BJ (cell line): ENCODE measurements at regions of chr10 and their contacts with region 1.

Region 1: DNA sequence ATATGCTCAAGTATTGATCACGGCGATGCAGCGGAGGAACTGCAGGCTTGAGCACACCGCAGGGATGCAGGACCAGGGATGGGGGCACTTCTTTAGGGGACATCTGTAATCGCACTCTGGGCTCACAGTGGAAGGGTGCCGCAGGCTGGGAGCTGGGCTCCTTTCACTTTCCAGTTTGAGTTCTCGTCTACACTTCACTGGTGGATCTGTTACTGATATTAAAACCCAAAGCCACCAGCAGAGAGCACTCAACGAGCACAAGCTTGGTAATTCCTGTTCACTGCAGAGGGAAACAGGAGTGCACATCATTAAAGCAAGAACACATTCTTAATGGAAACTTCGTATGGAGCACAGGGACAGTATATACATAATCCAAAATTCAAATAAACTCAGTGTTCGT is 91.3 kb downstream of the PARD3 start:
- DNase-seq: no peak
- H3K4me3 ChIP-seq: no peak overlapping the region
- H3K27me3 ChIP-seq: no peaks in the 10 kb centered on the region
- CTCF ChIP-seq: peak; percentile 62

Region 2: DNA sequence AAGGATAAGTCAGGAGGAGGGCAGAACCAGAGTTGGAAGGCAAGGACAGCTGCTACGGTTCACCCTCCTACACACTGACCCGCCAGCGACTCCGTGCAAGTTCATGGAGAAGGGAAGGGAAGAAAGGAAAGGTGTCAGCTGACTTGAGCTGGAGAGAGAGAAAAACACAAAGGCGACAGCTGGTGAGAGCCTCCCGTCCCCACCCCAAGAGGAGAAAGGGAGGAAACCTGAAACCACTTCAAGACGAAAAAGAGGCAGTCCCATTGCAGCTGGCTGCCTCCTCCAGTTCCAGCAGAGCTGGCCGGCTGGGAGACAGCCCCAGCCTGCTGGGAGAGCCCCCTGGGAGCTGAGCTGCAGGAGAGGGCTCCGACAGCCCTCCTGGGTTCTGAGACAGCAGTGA is 16.2 kb after region 1 on chr10:
- CTCF ChIA-PET with region 1: interaction called, 11 read pairs
- POLR2A ChIA-PET with region 1: no interaction called
- DNase-seq: peak; percentile 57
- H3K4me3 ChIP-seq: peak overlapping the region; percentile 15
- H3K27me3 ChIP-seq: no peaks in the 10 kb centered on the region
- CTCF ChIP-seq: no peak

Region 3: DNA sequence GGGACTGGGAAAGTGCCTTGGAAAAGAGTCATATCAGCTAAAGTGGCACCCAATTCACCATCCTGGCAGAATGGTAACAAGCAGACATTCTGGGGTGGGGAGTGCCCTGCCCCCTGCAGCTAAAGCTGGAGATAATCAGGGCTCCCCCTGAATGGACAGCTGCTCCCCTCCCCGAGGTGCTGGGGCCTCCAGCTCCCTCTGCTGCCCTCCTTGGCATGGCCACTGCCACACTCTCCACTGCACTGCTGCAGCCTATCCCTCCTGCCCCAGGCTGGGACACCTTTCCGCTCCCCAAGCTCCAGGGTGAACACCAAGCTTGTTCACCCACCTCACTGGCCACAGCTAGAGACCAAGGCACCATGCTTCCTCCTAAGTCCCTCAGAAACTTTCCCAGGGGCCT is 101.1 kb after region 1 on chr10:
- CTCF ChIA-PET with region 1: interaction called, 10 read pairs
- POLR2A ChIA-PET with region 1: no interaction called
- DNase-seq: no peak
- H3K4me3 ChIP-seq: no peak overlapping the region
- H3K27me3 ChIP-seq: no peaks in the 10 kb centered on the region
- CTCF ChIP-seq: peak; percentile 29; the same call in 1 of the 2 replicates

Region 4: GRCh38 chr10:34985823-34986222 is 262.1 kb after region 1 on chr10:
- CTCF ChIA-PET with region 1: interaction called, 15 read pairs
- POLR2A ChIA-PET with region 1: no interaction called
- DNase-seq: no peak
- H3K4me3 ChIP-seq: no peak overlapping the region
- H3K27me3 ChIP-seq: no peaks in the 10 kb centered on the region
- CTCF ChIP-seq: peak; percentile 48

Region 5: DNA sequence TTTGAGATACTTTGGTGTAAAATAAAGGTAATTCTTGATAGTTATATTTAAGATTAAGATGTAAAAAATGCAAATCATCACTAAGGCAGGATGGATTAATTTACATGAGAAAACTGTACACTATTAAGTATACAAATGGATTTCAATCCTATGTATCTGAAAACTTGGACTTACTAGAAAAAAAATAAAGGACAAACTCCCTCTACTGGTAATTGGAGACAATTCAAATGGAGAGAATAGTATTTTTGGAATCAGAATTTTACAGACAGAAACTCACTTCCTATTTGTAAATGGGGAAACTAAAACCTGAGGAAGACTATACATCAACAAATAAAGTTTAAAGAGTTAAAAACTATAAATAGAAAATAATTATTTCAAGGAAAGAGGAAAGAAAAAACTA is 303.8 kb after region 1 on chr10:
- CTCF ChIA-PET with region 1: interaction called, 10 read pairs
- POLR2A ChIA-PET with region 1: no interaction called
- DNase-seq: peak; percentile 15
- H3K4me3 ChIP-seq: no peak overlapping the region
- H3K27me3 ChIP-seq: no peaks in the 10 kb centered on the region
- CTCF ChIP-seq: peak; percentile 38; the same call in 1 of the 2 replicates